ENCODE measurements at regions of chr13 and their contacts with region 1.

Region 1: GRCh38 chr13:60163478-60164233 is at the start of gene DIAPH3:
- DNase-seq: peak; percentile 90 to 98
- H3K4me3 ChIP-seq: peak within 1 kb of the TSS; percentile 82 to 98 (median 88)
- H3K27ac ChIP-seq: peak within 1 kb of the TSS; percentile 92
- H3K4me1 ChIP-seq: peaks cover 0 to 7% (median 4%) of the 10 kb centered on the region in 4 experiments; a peak in 3 of 7 replicates
- H3K27me3 ChIP-seq: no peaks in the 10 kb centered on the region
- CTCF ChIP-seq: no peak
- EP300 ChIP-seq: no peak
- POLR2A ChIP-seq: peak; percentile 94 to 95
- RAD21 ChIP-seq: no peak; a peak in 1 of 4 replicates
- total RNA-seq, gene DIAPH3: 28.3 and 30.8 TPM in 2 replicates

Region 2: GRCh38 chr13:60150538-60150937 is 13.1 kb before region 1 on chr13:
- CTCF ChIA-PET with region 1: interaction called, 7 read pairs
- POLR2A ChIA-PET with region 1: interaction called, 12 read pairs
- DNase-seq: no peak
- H3K4me3 ChIP-seq: no peak overlapping the region
- H3K27ac ChIP-seq: no peak overlapping the region
- H3K4me1 ChIP-seq: peaks cover 0 to 4% (median 0%) of the 10 kb centered on the region in 4 experiments; a peak in 1 of 7 replicates
- H3K27me3 ChIP-seq: no peaks in the 10 kb centered on the region
- CTCF ChIP-seq: no peak
- EP300 ChIP-seq: no peak
- POLR2A ChIP-seq: no peak
- RAD21 ChIP-seq: no peak

Region 3: GRCh38 chr13:60431108-60431700 is 267.5 kb after region 1 on chr13:
- CTCF ChIA-PET with region 1: no interaction called
- POLR2A ChIA-PET with region 1: no interaction called
- DNase-seq: no peak
- H3K4me3 ChIP-seq: no peak overlapping the region
- H3K27ac ChIP-seq: no peak overlapping the region
- H3K4me1 ChIP-seq: no peaks in the 10 kb centered on the region
- H3K27me3 ChIP-seq: no peaks in the 10 kb centered on the region
- CTCF ChIP-seq: peak in 2 of 3 experiments; percentile 47 to 67; a peak in 2 of 4 replicates
- EP300 ChIP-seq: no peak
- POLR2A ChIP-seq: no peak
- RAD21 ChIP-seq: peak; percentile 84 to 90

Region 4: DNA sequence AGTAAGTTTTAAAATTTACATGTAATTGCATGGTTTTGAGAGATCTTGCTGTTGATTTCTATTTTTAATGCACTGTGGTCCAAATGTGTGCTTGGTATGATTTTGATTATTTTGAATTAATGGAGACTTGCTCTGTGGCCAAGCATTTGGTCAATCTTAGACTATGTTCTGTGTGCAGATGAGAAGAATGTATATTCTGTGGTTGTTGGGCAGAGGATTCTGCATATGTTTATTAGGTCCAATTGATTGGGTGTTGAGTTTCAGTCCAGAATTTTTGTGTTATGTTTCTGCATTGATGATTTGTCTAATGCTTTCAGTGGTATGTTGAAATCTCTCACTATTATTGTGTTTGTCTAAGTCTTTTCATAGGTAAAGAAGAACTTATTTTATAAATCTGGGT is 315.6 kb after region 1 on chr13:
- CTCF ChIA-PET with region 1: no interaction called
- POLR2A ChIA-PET with region 1: no interaction called
- DNase-seq: no peak
- H3K4me3 ChIP-seq: no peak overlapping the region
- H3K27ac ChIP-seq: no peak overlapping the region
- H3K4me1 ChIP-seq: no peaks in the 10 kb centered on the region
- H3K27me3 ChIP-seq: no peaks in the 10 kb centered on the region
- CTCF ChIP-seq: no peak
- EP300 ChIP-seq: no peak
- POLR2A ChIP-seq: no peak
- RAD21 ChIP-seq: no peak